Breast epithelium (tissue), 4 donors: ENCODE measurements at regions of chr4 and their contacts with region 1.

Region 1: GRCh38 chr4:155828628-155829027 is 37.4 kb downstream of the ASIC5 start:
- DNase-seq: no peak
- H3K4me3 ChIP-seq: no peak overlapping the region
- H3K27ac ChIP-seq: no peak overlapping the region
- H3K4me1 ChIP-seq: no peaks in the 10 kb centered on the region
- H3K27me3 ChIP-seq: no peaks in the 10 kb centered on the region
- CTCF ChIP-seq: no peak
- POLR2A ChIP-seq: no peak

Region 2: GRCh38 chr4:155143512-155143911 is 685.1 kb before region 1 on chr4:
- intact Hi-C with region 1: loop called (anchors 5 kb)
- DNase-seq: no peak
- H3K4me3 ChIP-seq: no peak overlapping the region
- H3K27ac ChIP-seq: no peak overlapping the region
- H3K4me1 ChIP-seq: no peaks in the 10 kb centered on the region
- H3K27me3 ChIP-seq: no peaks in the 10 kb centered on the region
- CTCF ChIP-seq: no peak
- POLR2A ChIP-seq: no peak

Region 3: DNA sequence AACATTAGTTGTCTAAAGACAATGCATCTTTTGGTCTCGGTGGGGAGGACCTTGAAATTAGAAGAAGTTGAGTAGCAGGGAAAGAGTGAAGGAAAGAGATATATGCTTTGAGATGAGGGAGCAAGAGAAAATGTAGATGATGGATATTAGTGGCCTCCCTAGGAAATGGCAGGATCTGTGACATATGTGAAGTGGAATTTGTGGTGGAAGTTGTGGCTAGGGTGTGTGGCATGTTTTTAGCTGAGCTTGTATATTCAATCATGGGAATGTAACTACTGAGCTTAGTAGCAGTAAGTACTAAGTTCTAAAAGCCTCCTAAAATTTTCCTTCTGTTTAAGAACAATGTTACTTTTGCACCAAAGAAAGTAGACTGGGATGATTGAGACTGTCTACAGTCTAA is 507.9 kb after region 1 on chr4:
- intact Hi-C with region 1: no loop called
- DNase-seq: no peak
- H3K4me3 ChIP-seq: no peak overlapping the region
- H3K27ac ChIP-seq: no peak overlapping the region
- H3K4me1 ChIP-seq: no peaks in the 10 kb centered on the region
- H3K27me3 ChIP-seq: no peaks in the 10 kb centered on the region
- CTCF ChIP-seq: no peak
- POLR2A ChIP-seq: no peak